CD4-positive, alpha-beta memory T cell (primary cell): ENCODE measurements at regions of chr18 and their contacts with region 1.

Region 1: GRCh38 chr18:79378542-79379250 is 17.0 kb upstream of the NFATC1 start:
- DNase-seq: peak; percentile 79 to 85 (median 83)
- H3K4me3 ChIP-seq: no peak overlapping the region
- H3K4me3 Mint-ChIP-seq: peak overlapping the region in 1 of 8 donors; percentile 4
- H3K27ac ChIP-seq: no peak overlapping the region
- H3K27ac Mint-ChIP-seq: peak overlapping the region in 5 of 7 donors; percentile 47 to 88 (median 68)
- H3K4me1 ChIP-seq: peaks cover 7% of the 10 kb centered on the region
- H3K4me1 Mint-ChIP-seq: peaks cover 4 to 10% (median 8%) of the 10 kb centered on the region in 4 donors
- H3K27me3 ChIP-seq: no peaks in the 10 kb centered on the region
- H3K27me3 Mint-ChIP-seq: no peaks in the 10 kb centered on the region

Region 2: GRCh38 chr18:79393635-79394533 is 15.2 kb after region 1 on chr18:
- CTCF ChIA-PET with region 1: interaction called, 53 read pairs
- POLR2A ChIA-PET with region 1: interaction called, 13 read pairs
- intact Hi-C with region 1: loop called (anchors 2 kb)
- DNase-seq: peak; percentile 49 to 77 (median 52)
- H3K4me3 ChIP-seq: peak overlapping the region in 1 of 2 donors; percentile 57
- H3K4me3 Mint-ChIP-seq: peak overlapping the region; percentile 86 to 94 (median 90)
- H3K27ac ChIP-seq: peak overlapping the region; percentile 41
- H3K27ac Mint-ChIP-seq: peak overlapping the region; percentile 65 to 93 (median 88)
- H3K4me1 ChIP-seq: peaks cover 37% of the 10 kb centered on the region
- H3K4me1 Mint-ChIP-seq: peaks cover 18 to 44% (median 21%) of the 10 kb centered on the region in 4 donors
- H3K27me3 ChIP-seq: no peaks in the 10 kb centered on the region
- H3K27me3 Mint-ChIP-seq: peaks cover 3 to 4% of the 10 kb centered on the region in 2 donors

Region 3: GRCh38 chr18:79507076-79507545 is 128.4 kb after region 1 on chr18:
- CTCF ChIA-PET with region 1: interaction called, 10 read pairs
- POLR2A ChIA-PET with region 1: no interaction called
- intact Hi-C with region 1: no loop called
- DNase-seq: peak in 3 of 5 donors; percentile 23 to 48 (median 27)
- H3K4me3 ChIP-seq: no peak overlapping the region
- H3K4me3 Mint-ChIP-seq: peak overlapping the region in 7 of 8 donors; percentile 38 to 78 (median 68)
- H3K27ac ChIP-seq: peak overlapping the region; percentile 36
- H3K27ac Mint-ChIP-seq: peak overlapping the region; percentile 87 to 92 (median 91)
- H3K4me1 ChIP-seq: peaks cover 54% of the 10 kb centered on the region
- H3K4me1 Mint-ChIP-seq: peaks cover 35 to 68% (median 51%) of the 10 kb centered on the region in 4 donors
- H3K27me3 ChIP-seq: no peaks in the 10 kb centered on the region
- H3K27me3 Mint-ChIP-seq: no peaks in the 10 kb centered on the region

Region 4: DNA sequence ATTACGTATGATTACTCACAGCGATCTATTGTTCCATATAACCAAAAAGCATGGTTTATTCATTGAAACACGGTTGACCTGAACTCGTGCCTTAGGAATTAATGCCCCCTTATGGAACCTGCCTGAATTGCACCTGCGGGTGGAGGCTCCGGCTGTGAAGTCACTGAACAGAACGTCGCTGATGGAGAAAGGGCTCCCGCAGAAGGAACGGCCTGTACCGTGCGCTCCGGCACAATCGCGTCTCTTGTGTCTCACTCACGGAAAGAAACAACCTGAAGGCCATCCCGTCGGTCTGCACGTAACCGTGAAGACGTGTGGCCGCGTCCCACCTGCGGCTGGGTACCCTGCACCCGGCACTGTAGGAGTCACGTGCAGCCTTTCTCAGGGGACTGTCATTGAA is 150.2 kb after region 1 on chr18:
- CTCF ChIA-PET with region 1: interaction called, 140 read pairs
- POLR2A ChIA-PET with region 1: interaction called, 8 read pairs
- intact Hi-C with region 1: loop called (anchors 1 kb)
- DNase-seq: peak; percentile 72 to 78 (median 75)
- H3K4me3 ChIP-seq: no peak overlapping the region
- H3K4me3 Mint-ChIP-seq: peak overlapping the region in 1 of 8 donors; percentile 30
- H3K27ac ChIP-seq: no peak overlapping the region
- H3K27ac Mint-ChIP-seq: peak overlapping the region in 5 of 7 donors; percentile 14 to 84 (median 57)
- H3K4me1 ChIP-seq: peaks cover 15% of the 10 kb centered on the region
- H3K4me1 Mint-ChIP-seq: peaks cover 8 to 37% (median 20%) of the 10 kb centered on the region in 4 donors
- H3K27me3 ChIP-seq: no peaks in the 10 kb centered on the region
- H3K27me3 Mint-ChIP-seq: no peaks in the 10 kb centered on the region

Region 5: GRCh38 chr18:79679111-79679872 is 300.6 kb after region 1 on chr18 and contains the start of gene CTDP1:
- CTCF ChIA-PET with region 1: no interaction called
- POLR2A ChIA-PET with region 1: no interaction called
- intact Hi-C with region 1: loop called (anchors 1 kb)
- DNase-seq: peak; percentile 98 to 99 (median 99)
- H3K4me3 ChIP-seq: peak within 1 kb of the TSS; percentile 75 to 88
- H3K4me3 Mint-ChIP-seq: peak within 1 kb of the TSS; percentile 95 to 100 (median 98)
- H3K27ac ChIP-seq: peak within 1 kb of the TSS; percentile 98
- H3K27ac Mint-ChIP-seq: peak within 1 kb of the TSS; percentile 99 to 100 (median 99)
- H3K4me1 ChIP-seq: peaks cover 53% of the 10 kb centered on the region
- H3K4me1 Mint-ChIP-seq: peaks cover 40 to 64% (median 54%) of the 10 kb centered on the region in 4 donors
- H3K27me3 ChIP-seq: no peaks in the 10 kb centered on the region
- H3K27me3 Mint-ChIP-seq: no peaks in the 10 kb centered on the region
- total RNA-seq, gene CTDP1: 42.6 to 44.5 TPM